Activated naive CD4-positive, alpha-beta T cell treated with anti-CD3 and anti-CD28 coated beads for 36 hours (primary cell): ENCODE measurements at regions of chr2 and their contacts with region 1.

Region 1: DNA sequence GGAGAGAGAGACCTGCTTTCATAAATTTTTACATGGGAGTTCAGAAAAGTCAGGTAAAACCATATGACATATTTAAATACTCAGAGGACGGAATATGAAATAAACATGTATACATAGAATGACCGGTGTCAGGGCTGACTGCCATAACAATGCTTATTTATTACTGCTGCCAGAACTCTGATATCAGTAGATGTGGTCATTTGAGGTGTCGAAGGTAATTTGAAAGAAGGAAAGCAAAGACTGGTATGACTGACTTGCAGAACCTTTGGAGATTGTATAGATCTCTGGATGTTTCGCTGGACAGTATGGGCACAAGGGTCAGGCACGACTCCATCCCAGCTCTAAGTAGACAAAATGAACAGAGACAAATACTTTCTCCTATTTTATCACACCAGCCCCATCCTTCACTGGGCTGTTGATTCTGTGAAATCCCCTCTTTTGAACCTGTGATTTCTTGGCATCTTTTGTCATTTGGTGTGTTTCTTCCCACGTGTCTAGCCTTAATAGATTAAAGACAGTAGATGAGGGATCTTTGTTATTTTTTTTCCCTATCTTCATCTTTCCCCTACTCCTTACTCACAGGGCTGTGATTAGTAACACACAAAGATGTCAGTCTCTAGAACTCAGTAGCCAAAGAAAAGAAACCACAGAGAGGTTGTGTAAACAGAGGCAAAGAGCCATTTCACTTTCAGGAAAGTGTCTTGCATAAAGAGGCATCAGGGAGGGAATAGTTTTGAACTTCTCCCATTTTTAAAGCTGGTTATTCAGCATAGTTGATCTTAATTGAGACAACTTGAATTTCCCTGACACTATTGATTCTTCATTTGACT is 61.6 kb downstream of the ICOS start:
- DNase-seq: no peak
- H3K4me3 Mint-ChIP-seq: peak overlapping the region; percentile 4
- H3K27ac Mint-ChIP-seq: peak overlapping the region; percentile 77
- H3K4me1 Mint-ChIP-seq: peaks cover 68% of the 10 kb centered on the region
- H3K27me3 Mint-ChIP-seq: no peaks in the 10 kb centered on the region

Region 2: GRCh38 chr2:203949228-203949627 is 49.0 kb before region 1 on chr2:
- CTCF ChIA-PET with region 1: no interaction called
- intact Hi-C with region 1: loop called (anchors 1 kb)
- DNase-seq: no peak
- H3K4me3 Mint-ChIP-seq: peak overlapping the region; percentile 42
- H3K27ac Mint-ChIP-seq: peak overlapping the region; percentile 70
- H3K4me1 Mint-ChIP-seq: peaks cover 87% of the 10 kb centered on the region
- H3K27me3 Mint-ChIP-seq: no peaks in the 10 kb centered on the region

Region 3: GRCh38 chr2:204015118-204015843 is 17.1 kb after region 1 on chr2:
- CTCF ChIA-PET with region 1: interaction called, 15 read pairs
- intact Hi-C with region 1: loop called (anchors 1 kb)
- DNase-seq: peak; percentile 55
- H3K4me3 Mint-ChIP-seq: no peak overlapping the region
- H3K27ac Mint-ChIP-seq: peak overlapping the region; percentile 87
- H3K4me1 Mint-ChIP-seq: peaks cover 75% of the 10 kb centered on the region
- H3K27me3 Mint-ChIP-seq: no peaks in the 10 kb centered on the region

Region 4: GRCh38 chr2:204065566-204065965 is 67.4 kb after region 1 on chr2:
- CTCF ChIA-PET with region 1: no interaction called
- intact Hi-C with region 1: no loop called
- DNase-seq: no peak
- H3K4me3 Mint-ChIP-seq: no peak overlapping the region
- H3K27ac Mint-ChIP-seq: no peak overlapping the region
- H3K4me1 Mint-ChIP-seq: peaks cover 5% of the 10 kb centered on the region
- H3K27me3 Mint-ChIP-seq: no peaks in the 10 kb centered on the region

Region 5: GRCh38 chr2:205077159-205077558 is 1079.0 kb after region 1 on chr2:
- CTCF ChIA-PET with region 1: no interaction called
- intact Hi-C with region 1: loop called (anchors 5 kb)
- DNase-seq: peak; percentile 9
- H3K4me3 Mint-ChIP-seq: peak overlapping the region; percentile 46
- H3K27ac Mint-ChIP-seq: peak overlapping the region; percentile 50
- H3K4me1 Mint-ChIP-seq: peaks cover 53% of the 10 kb centered on the region
- H3K27me3 Mint-ChIP-seq: no peaks in the 10 kb centered on the region